ENCODE measurements at regions of chr2 and their contacts with region 1.

Region 1: GRCh38 chr2:108927936-108928659 is 60.9 kb downstream of the EDAR start:
- DNase-seq: peak; percentile 20 to 50
- H3K4me3 ChIP-seq: no peak overlapping the region
- H3K27ac ChIP-seq: no peak overlapping the region
- H3K4me1 ChIP-seq: peaks cover 7% of the 10 kb centered on the region
- H3K27me3 ChIP-seq: 0 out of 2 replicates have a peak, but pooled peaks cover 3% of the 10 kb centered on the region
- CTCF ChIP-seq: peak; percentile 92

Region 2: DNA sequence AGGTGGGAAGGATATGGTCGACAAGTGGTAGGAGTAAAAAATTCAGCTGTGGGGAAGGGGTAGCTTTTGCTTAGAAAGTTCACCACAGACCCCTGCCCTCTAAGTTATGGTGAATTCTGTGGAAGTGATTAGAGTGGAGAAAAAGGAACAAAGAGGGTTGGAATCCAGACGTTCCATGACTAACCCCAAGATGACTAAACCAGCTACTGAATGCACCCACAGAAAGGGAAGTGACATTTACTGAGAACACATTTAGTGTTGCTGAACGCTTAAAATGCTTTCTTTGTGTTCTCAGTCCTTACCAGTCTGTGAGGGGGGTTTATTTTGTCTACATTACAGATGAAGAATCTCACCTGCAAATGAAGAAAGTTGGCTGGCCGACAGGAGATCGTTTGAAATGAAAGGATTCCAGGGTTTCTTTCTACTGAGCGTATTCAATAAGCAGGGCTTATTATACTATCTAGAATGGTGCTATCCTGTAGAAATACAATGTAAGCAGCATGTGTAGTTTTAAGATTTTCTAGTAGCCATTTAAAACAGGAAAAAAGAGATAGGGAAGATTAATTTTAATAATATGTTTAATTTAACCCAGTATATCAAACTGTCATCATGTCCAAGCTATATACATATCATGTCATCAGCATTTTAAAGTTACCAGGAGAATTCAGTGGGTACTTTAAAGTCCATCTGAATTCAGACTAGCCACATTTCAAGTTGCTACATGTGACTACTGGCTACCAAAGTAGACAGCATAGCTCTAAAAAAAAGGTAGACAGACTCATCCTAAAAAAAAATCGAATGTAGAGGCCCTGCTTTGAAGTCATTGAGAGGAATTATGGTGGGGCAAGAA is 333.7 kb before region 1 on chr2:
- CTCF ChIA-PET with region 1: no interaction called
- POLR2A ChIA-PET with region 1: no interaction called
- intact Hi-C with region 1: no loop called
- DNase-seq: peak; percentile 10 to 62
- H3K4me3 ChIP-seq: no peak overlapping the region; the same call in 1 of the 2 replicates
- H3K27ac ChIP-seq: peak overlapping the region; percentile 74
- H3K4me1 ChIP-seq: peaks cover 29% of the 10 kb centered on the region
- H3K27me3 ChIP-seq: no peaks in the 10 kb centered on the region
- CTCF ChIP-seq: no peak

Region 3: GRCh38 chr2:108968619-108969018 is 40.5 kb after region 1 on chr2:
- CTCF ChIA-PET with region 1: no interaction called
- POLR2A ChIA-PET with region 1: interaction called, 3 read pairs
- intact Hi-C with region 1: loop called (anchors 5 kb)
- DNase-seq: peak; percentile 48 to 58
- H3K4me3 ChIP-seq: no peak overlapping the region
- H3K27ac ChIP-seq: no peak overlapping the region
- H3K4me1 ChIP-seq: peaks cover 63% of the 10 kb centered on the region
- H3K27me3 ChIP-seq: no peaks in the 10 kb centered on the region
- CTCF ChIP-seq: no peak

Region 4: DNA sequence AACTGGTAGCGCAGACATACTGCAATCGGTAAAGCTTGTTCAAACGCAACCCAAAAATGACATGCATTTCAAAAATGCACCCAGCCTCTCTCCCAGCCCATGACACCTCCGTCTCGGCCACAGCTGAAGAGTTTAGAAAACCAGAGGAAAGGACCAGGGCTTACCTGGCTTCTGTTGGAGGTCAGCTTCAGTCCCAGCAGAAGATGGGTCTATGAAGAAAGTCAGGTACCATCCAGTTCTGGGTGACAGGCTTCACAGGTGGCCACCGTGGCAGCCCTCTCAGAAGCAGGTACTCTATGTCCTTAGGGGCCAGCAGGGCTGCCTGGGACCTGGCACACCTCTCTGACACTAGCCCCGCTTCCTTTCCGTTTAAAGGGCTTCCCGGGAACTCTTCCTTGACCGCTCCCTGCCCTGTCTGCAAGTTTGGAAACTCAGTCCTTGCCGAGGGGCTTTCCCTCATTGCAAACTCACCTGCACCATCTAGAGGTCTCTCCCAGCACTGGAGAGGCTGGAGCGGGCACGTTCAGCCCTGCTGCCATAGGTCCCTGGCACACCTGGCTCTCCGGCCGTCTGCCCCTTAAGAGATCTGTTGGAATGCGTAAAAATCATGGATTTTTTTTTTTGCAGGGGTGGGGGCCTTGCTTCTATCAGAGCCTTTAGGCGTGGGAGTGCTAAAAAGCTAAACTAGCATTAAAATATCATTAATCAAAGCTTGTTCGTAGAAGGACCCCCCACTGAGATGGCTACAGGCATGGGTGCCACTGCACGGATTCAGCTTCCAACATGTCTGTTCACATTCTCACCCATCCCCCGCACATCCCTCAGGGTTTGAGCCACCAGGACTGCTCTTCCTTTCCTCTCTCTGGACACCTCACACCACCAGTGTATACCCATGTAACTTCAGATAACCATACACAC is 61.0 kb after region 1 on chr2 and contains the start of gene EDAR:
- CTCF ChIA-PET with region 1: no interaction called
- POLR2A ChIA-PET with region 1: no interaction called
- intact Hi-C with region 1: loop called (anchors 1 kb)
- DNase-seq: peak; percentile 52 to 67
- H3K4me3 ChIP-seq: 0 out of 2 replicates have a peak within 1 kb of the TSS, but pooled peaks have one; percentile 6
- H3K27ac ChIP-seq: no peak within 1 kb of the TSS
- H3K4me1 ChIP-seq: peaks cover 4% of the 10 kb centered on the region; the same call in 1 of the 2 replicates
- H3K27me3 ChIP-seq: peaks cover 13% of the 10 kb centered on the region
- CTCF ChIP-seq: peak; percentile 57
- total RNA-seq, gene EDAR: not detected in 2 replicates

Measured in PC-9 (cell line).